K562 (cell line): ENCODE measurements at regions of chr10 and their contacts with region 1.

Region 1: GRCh38 chr10:109883859-109884771 is 39.2 kb downstream of the XPNPEP1 start:
- DNase-seq: peak; percentile 74 to 83 (median 74)
- ATAC-seq: peak; percentile 96
- H3K4me3 ChIP-seq: no peak overlapping the region
- H3K27ac ChIP-seq: no peak overlapping the region; the same call in 2 of the 3 replicates
- H3K4me1 ChIP-seq: peaks cover 0 to 3% of the 10 kb centered on the region in 2 experiments; a peak in 2 of 5 replicates
- H3K27me3 ChIP-seq: no peaks in the 10 kb centered on the region
- CTCF ChIP-seq: peak; percentile 88 to 94 (median 92)
- EP300 ChIP-seq: no peak
- POLR2A ChIP-seq: no peak
- RAD21 ChIP-seq: peak; percentile 78 to 85

Region 2: GRCh38 chr10:109956454-109957091 is 72.5 kb after region 1 on chr10:
- CTCF ChIA-PET with region 1: no interaction called
- POLR2A ChIA-PET with region 1: no interaction called
- in situ Hi-C with region 1: no loop called
- intact Hi-C with region 1: loop called (anchors 2 kb)
- DNase-seq: peak; percentile 53 to 77 (median 62)
- ATAC-seq: peak; percentile 97
- H3K4me3 ChIP-seq: no peak overlapping the region
- H3K27ac ChIP-seq: no peak overlapping the region
- H3K4me1 ChIP-seq: no peaks in the 10 kb centered on the region
- H3K27me3 ChIP-seq: no peaks in the 10 kb centered on the region
- CTCF ChIP-seq: peak; percentile 64 to 70 (median 66)
- EP300 ChIP-seq: no peak
- POLR2A ChIP-seq: no peak
- RAD21 ChIP-seq: peak; percentile 50 to 71

Region 3: GRCh38 chr10:109987452-109988211 is 103.5 kb after region 1 on chr10:
- CTCF ChIA-PET with region 1: no interaction called
- POLR2A ChIA-PET with region 1: no interaction called
- in situ Hi-C with region 1: no loop called
- intact Hi-C with region 1: no loop called
- DNase-seq: no peak
- ATAC-seq: peak; percentile 57; the same call in 2 of the 3 replicates
- H3K4me3 ChIP-seq: no peak overlapping the region
- H3K27ac ChIP-seq: no peak overlapping the region
- H3K4me1 ChIP-seq: peaks cover 6 to 17% of the 10 kb centered on the region in 2 experiments; a peak in 4 of 5 replicates
- H3K27me3 ChIP-seq: no peaks in the 10 kb centered on the region
- CTCF ChIP-seq: no peak
- EP300 ChIP-seq: no peak
- POLR2A ChIP-seq: no peak
- RAD21 ChIP-seq: no peak

Region 4: DNA sequence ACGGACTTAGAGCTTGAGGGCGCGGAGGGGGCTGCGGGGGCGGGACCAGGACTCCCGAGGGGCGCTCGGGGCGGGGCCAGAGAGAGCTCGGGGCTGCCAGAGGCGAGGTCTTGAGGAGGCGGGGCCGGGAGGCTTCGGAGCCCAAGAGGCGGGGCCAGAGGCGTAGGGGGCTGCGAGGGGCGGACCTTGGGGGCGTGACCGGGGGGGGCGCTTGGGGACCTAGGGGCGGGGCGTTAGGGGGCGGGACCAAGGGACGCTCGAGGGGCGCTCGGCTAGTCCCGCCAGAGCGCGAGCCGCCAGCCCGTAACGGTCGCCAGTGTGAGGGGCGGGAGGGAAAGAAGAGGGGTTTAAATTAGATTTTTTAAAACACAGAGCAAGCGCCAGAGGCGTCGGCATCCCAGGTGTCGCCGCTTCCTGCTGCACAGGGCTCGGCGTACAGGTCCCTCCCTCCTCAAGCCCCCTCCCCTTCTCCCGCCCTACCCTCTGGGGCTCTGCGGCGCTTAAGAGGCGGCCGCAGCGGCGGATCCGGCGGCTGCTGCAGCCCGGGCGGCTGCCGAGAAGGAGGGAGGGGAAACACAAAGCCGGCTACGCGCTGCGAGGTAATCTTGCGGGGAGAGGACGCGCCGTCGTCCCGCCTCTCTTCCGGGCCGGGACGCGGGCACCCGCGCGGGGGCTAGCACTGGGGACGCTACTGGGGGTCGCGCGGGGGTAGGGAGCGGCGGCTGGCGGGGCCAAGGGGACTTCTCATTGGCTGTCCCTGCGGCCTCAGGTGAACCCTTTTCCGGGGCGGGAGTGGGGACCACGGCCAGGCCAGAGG is 123.8 kb after region 1 on chr10 and contains the start of gene ADD3:
- CTCF ChIA-PET with region 1: no interaction called
- POLR2A ChIA-PET with region 1: no interaction called
- in situ Hi-C with region 1: no loop called
- intact Hi-C with region 1: loop called (anchors 5 kb)
- DNase-seq: peak; percentile 94 to 97 (median 96)
- ATAC-seq: peak; percentile 82
- H3K4me3 ChIP-seq: peak within 1 kb of the TSS; percentile 92
- H3K27ac ChIP-seq: peak within 1 kb of the TSS; percentile 92
- H3K4me1 ChIP-seq: peaks cover 15 to 32% of the 10 kb centered on the region in 2 experiments
- H3K27me3 ChIP-seq: no peaks in the 10 kb centered on the region
- CTCF ChIP-seq: no peak
- EP300 ChIP-seq: no peak
- POLR2A ChIP-seq: peak; percentile 66; the same call in 1 of the 2 replicates
- RAD21 ChIP-seq: no peak
- polyA plus RNA-seq, gene ADD3: 13.2 to 15.1 TPM

Region 5: GRCh38 chr10:110137142-110137545 is 253.0 kb after region 1 on chr10:
- CTCF ChIA-PET with region 1: no interaction called
- POLR2A ChIA-PET with region 1: interaction called, 3 read pairs
- in situ Hi-C with region 1: loop called (anchors 10 kb)
- intact Hi-C with region 1: loop called (anchors 1 kb)
- DNase-seq: peak; percentile 40 to 54 (median 42)
- ATAC-seq: peak; percentile 86
- H3K4me3 ChIP-seq: no peak overlapping the region
- H3K27ac ChIP-seq: 0 out of 3 replicates have a peak overlapping the region, but pooled peaks have one; percentile 21
- H3K4me1 ChIP-seq: peaks cover 0 to 2% of the 10 kb centered on the region in 2 experiments; a peak in 2 of 5 replicates
- H3K27me3 ChIP-seq: no peaks in the 10 kb centered on the region
- CTCF ChIP-seq: peak; percentile 68 to 79 (median 71)
- EP300 ChIP-seq: no peak
- POLR2A ChIP-seq: no peak
- RAD21 ChIP-seq: peak; percentile 85 to 88

Region 6: DNA sequence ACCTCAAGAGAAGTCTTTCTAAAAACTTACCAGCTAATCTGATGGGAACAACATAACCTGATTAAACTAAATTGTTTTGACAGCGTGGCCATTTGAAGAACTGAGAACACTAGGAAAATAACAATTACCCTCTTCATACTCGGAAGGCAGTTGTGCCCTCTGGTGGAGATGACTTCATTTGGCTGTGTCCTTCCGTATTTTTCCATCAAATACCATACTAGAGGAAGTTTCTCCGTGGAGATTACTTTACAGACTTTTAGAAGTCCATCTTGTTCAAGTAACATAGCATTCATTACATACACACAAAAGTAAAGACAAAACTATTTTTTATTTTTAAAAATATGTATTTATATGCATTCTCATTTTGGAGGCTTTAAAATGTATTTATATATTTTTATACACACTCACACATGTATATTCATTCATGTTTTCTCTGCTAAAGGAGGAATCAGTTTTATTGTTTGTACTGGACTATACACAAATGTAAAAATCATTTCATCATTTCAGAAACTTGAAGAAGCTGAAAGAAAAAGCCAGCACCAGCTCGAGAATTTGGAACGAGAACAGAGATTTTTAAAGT is 395.4 kb after region 1 on chr10:
- CTCF ChIA-PET with region 1: no interaction called
- POLR2A ChIA-PET with region 1: no interaction called
- in situ Hi-C with region 1: no loop called
- intact Hi-C with region 1: loop called (anchors 2 kb)
- DNase-seq: peak; percentile 12 to 69 (median 20)
- ATAC-seq: peak; percentile 83
- H3K4me3 ChIP-seq: no peak overlapping the region
- H3K27ac ChIP-seq: no peak overlapping the region
- H3K4me1 ChIP-seq: peaks cover 0 to 10% of the 10 kb centered on the region in 2 experiments; a peak in 3 of 5 replicates
- H3K27me3 ChIP-seq: no peaks in the 10 kb centered on the region
- CTCF ChIP-seq: peak; percentile 50 to 76 (median 66)
- EP300 ChIP-seq: no peak
- POLR2A ChIP-seq: no peak
- RAD21 ChIP-seq: peak; percentile 85 to 92